Gastrocnemius medialis (tissue), 4 donors: ENCODE measurements at regions of chr15 and their contacts with region 1.

Region 1: GRCh38 chr15:98753726-98754671 is 105.7 kb downstream of the IGF1R start:
- DNase-seq: no peak
- ATAC-seq: no peak
- H3K4me3 ChIP-seq: peak overlapping the region in 3 of 4 donors; percentile 7 to 34 (median 19)
- H3K27ac ChIP-seq: no peak overlapping the region
- H3K4me1 ChIP-seq: peaks cover 14 to 21% of the 10 kb centered on the region in 2 donors
- H3K27me3 ChIP-seq: no peaks in the 10 kb centered on the region
- CTCF ChIP-seq: no peak
- POLR2A ChIP-seq: no peak

Region 2: DNA sequence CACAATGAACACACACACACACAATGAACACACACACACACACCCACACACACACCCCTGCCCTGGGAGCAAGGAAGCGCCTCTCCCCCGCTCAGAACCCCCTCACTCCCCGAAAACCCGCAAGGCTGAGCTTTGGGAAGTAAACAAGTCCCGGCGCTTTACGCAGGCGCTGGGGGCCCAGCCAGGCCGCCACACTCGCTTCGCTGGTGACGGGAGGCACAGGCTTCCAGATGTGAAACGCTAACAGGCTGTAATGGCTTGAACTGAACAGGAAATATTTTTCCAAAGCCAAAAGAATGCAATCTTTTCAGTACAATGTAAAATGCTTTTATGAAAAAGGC is 228.4 kb before region 1 on chr15:
- in situ Hi-C with region 1: no loop called
- intact Hi-C with region 1: no loop called
- DNase-seq: no peak
- ATAC-seq: no peak
- H3K4me3 ChIP-seq: no peak overlapping the region
- H3K27ac ChIP-seq: no peak overlapping the region
- H3K4me1 ChIP-seq: no peaks in the 10 kb centered on the region
- H3K27me3 ChIP-seq: peaks cover 7 to 13% (median 13%) of the 10 kb centered on the region in 3 donors
- CTCF ChIP-seq: no peak
- POLR2A ChIP-seq: no peak

Region 3: GRCh38 chr15:98727115-98728085 is 26.6 kb before region 1 on chr15:
- in situ Hi-C with region 1: no loop called
- intact Hi-C with region 1: loop called (anchors 2 kb)
- DNase-seq: peak; percentile 67 to 84
- ATAC-seq: peak; percentile 84 to 94
- H3K4me3 ChIP-seq: peak overlapping the region in 1 of 4 donors; percentile 18
- H3K27ac ChIP-seq: peak overlapping the region; percentile 63 to 73 (median 72)
- H3K4me1 ChIP-seq: peaks cover 41 to 52% of the 10 kb centered on the region in 2 donors
- H3K27me3 ChIP-seq: no peaks in the 10 kb centered on the region
- CTCF ChIP-seq: no peak
- POLR2A ChIP-seq: no peak

Region 4: GRCh38 chr15:99213187-99213811 is 459.3 kb after region 1 on chr15:
- in situ Hi-C with region 1: loop called in 1 of 4 experiments (anchors 25 kb)
- intact Hi-C with region 1: no loop called
- DNase-seq: peak; percentile 68 to 83
- ATAC-seq: peak; percentile 57 to 80
- H3K4me3 ChIP-seq: no peak overlapping the region
- H3K27ac ChIP-seq: peak overlapping the region; percentile 54 to 81 (median 66)
- H3K4me1 ChIP-seq: peaks cover 12 to 40% of the 10 kb centered on the region in 2 donors
- H3K27me3 ChIP-seq: no peaks in the 10 kb centered on the region
- CTCF ChIP-seq: peak; percentile 87 to 96 (median 91)
- POLR2A ChIP-seq: no peak

Region 5: DNA sequence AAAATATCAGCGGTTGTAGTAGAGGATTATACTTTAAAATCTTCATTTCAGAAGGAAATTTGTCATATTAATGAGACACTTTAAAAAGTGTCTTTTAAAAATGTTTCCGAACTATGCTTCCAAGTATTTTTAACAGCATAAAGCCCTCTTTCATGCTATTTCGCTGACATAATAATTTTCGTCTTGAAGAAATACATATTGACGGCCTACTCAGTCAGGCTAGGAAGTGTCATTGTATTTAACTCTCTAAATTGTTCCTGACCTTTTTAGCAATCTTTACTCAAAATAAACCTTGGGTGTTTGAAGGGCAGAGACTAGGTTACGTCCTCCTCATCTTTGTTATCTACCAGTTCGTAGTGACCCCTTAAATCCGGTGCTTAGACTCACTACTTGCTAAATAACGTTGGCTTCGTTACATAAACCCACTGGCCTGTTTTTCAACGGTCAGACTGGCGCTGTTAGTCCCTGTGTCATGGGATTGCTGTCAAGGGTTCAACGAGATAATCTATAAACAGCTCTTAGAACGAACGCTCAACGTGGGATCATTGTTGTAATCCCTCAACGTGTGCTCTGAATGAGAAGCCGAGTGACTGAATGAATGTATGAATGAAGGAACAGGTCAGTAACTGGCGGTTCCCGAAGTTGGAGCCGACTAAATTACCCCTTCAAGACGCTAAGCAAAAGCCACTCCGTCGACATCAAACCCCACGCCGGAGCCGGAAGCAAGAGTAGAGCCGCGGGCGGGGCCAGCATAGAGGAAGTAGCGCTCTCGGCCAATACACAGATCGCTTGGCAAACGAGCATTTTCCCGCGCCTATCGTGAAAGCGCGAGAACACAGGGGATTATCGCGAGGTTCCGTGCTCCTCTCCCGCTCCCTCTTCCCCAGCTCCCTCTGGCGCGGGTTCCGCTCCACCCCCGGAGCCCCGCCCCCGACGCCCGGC is 496.8 kb after region 1 on chr15:
- in situ Hi-C with region 1: loop called in 1 of 4 experiments (anchors 25 kb)
- intact Hi-C with region 1: no loop called
- DNase-seq: peak; percentile 98 to 99
- ATAC-seq: peak; percentile 94 to 95
- H3K4me3 ChIP-seq: peak overlapping the region; percentile 53 to 89 (median 84)
- H3K27ac ChIP-seq: peak overlapping the region; percentile 93 to 96 (median 96)
- H3K4me1 ChIP-seq: peaks cover 34 to 40% of the 10 kb centered on the region in 2 donors
- H3K27me3 ChIP-seq: no peaks in the 10 kb centered on the region
- CTCF ChIP-seq: no peak
- POLR2A ChIP-seq: peak; percentile 89 to 96